ENCODE measurements at regions of chr7 and their contacts with region 1.

Region 1: GRCh38 chr7:104225451-104225850 is 17.6 kb upstream of the ORC5 start:
- DNase-seq: no peak
- ATAC-seq: no peak
- H3K4me3 ChIP-seq: no peak overlapping the region
- H3K27ac ChIP-seq: no peak overlapping the region
- H3K4me1 ChIP-seq: 0 out of 5 replicates have a peak, but pooled peaks cover 0 to 2% of the 10 kb centered on the region in 2 experiments
- H3K27me3 ChIP-seq: no peaks in the 10 kb centered on the region
- CTCF ChIP-seq: no peak
- EP300 ChIP-seq: no peak
- POLR2A ChIP-seq: no peak
- RAD21 ChIP-seq: no peak

Region 2: DNA sequence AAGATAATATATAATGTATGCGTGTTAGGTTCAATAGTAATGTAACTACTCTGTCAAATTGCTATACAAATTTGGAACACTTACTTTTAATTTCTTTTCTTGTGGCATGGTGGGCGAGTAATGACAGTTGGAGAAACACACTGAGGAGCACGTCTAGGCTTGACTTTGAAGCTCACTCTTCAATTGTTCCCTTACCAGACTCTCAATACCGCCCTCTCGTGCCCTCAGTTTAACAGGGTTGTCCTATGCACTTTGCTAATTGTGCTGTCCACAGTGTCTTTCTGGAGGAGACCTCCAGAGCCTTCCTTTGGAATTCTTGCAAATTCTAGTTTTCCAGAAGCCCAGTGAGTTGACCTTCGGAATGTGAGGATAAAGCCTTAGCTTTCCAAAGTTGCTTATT is 128.8 kb before region 1 on chr7:
- CTCF ChIA-PET with region 1: no interaction called
- POLR2A ChIA-PET with region 1: no interaction called
- in situ Hi-C with region 1: no loop called
- intact Hi-C with region 1: no loop called
- DNase-seq: peak in 3 of 4 experiments; percentile 41 to 86 (median 72)
- ATAC-seq: peak; percentile 93
- H3K4me3 ChIP-seq: no peak overlapping the region
- H3K27ac ChIP-seq: no peak overlapping the region
- H3K4me1 ChIP-seq: peaks cover 5 to 17% of the 10 kb centered on the region in 2 experiments; a peak in 4 of 5 replicates
- H3K27me3 ChIP-seq: no peaks in the 10 kb centered on the region
- CTCF ChIP-seq: peak; percentile 74 to 76 (median 75)
- EP300 ChIP-seq: no peak
- POLR2A ChIP-seq: no peak
- RAD21 ChIP-seq: peak; percentile 81 to 87

Region 3: GRCh38 chr7:104497387-104497786 is 271.9 kb after region 1 on chr7:
- CTCF ChIA-PET with region 1: no interaction called
- POLR2A ChIA-PET with region 1: no interaction called
- in situ Hi-C with region 1: no loop called
- intact Hi-C with region 1: no loop called
- DNase-seq: no peak
- ATAC-seq: no peak
- H3K4me3 ChIP-seq: no peak overlapping the region
- H3K27ac ChIP-seq: no peak overlapping the region
- H3K4me1 ChIP-seq: no peaks in the 10 kb centered on the region
- H3K27me3 ChIP-seq: no peaks in the 10 kb centered on the region
- CTCF ChIP-seq: no peak
- EP300 ChIP-seq: no peak
- POLR2A ChIP-seq: no peak
- RAD21 ChIP-seq: no peak

Region 4: GRCh38 chr7:104548868-104549267 is 323.4 kb after region 1 on chr7:
- CTCF ChIA-PET with region 1: no interaction called
- POLR2A ChIA-PET with region 1: no interaction called
- in situ Hi-C with region 1: no loop called
- intact Hi-C with region 1: loop called (anchors 10 kb)
- DNase-seq: peak in 2 of 4 experiments; percentile 9 to 17
- ATAC-seq: peak; percentile 74
- H3K4me3 ChIP-seq: no peak overlapping the region
- H3K27ac ChIP-seq: no peak overlapping the region
- H3K4me1 ChIP-seq: no peaks in the 10 kb centered on the region
- H3K27me3 ChIP-seq: no peaks in the 10 kb centered on the region
- CTCF ChIP-seq: peak; percentile 36 to 41 (median 39); a peak in 4 of 6 replicates
- EP300 ChIP-seq: no peak
- POLR2A ChIP-seq: no peak
- RAD21 ChIP-seq: peak in 1 of 2 experiments; percentile 7; a peak in 1 of 4 replicates